Endothelial cell of umbilical vein (primary cell): ENCODE measurements at regions of chr4 and their contacts with region 1.

Region 1: GRCh38 chr4:109548655-109549054 is 11.4 kb upstream of the MCUB start:
- DNase-seq: peak; percentile 94
- H3K4me3 ChIP-seq: peak overlapping the region in 1 of 3 experiments; percentile 1
- H3K27ac ChIP-seq: peak overlapping the region; percentile 84
- H3K4me1 ChIP-seq: peaks cover 17% of the 10 kb centered on the region
- H3K27me3 ChIP-seq: no peaks in the 10 kb centered on the region
- CTCF ChIP-seq: no peak
- POLR2A ChIP-seq: peak; percentile 36

Region 2: DNA sequence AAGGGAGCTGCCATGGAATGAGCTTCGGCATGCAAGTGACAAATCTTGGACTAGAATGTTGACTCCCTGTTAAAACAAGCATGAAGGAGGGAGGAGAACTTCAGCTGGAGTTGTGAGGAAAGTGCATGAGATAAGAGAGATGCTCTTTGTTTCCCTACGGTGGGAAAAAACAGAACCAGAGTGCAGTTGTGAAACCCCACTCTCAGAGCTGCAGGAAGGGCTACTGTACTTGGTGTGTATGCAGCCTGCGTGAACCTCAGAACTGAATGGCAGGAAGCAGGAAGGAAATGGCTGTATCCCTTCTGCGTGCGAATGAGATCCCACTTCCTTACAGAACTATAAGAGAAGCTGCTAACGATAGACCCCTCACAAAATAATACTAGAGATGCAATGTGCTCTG is 421.3 kb after region 1 on chr4:
- CTCF ChIA-PET with region 1: no interaction called
- POLR2A ChIA-PET with region 1: no interaction called
- dilution Hi-C with region 1: no loop called
- intact Hi-C with region 1: loop called (anchors 2 kb)
- DNase-seq: peak; percentile 75
- H3K4me3 ChIP-seq: peak overlapping the region in 1 of 3 experiments; percentile 4
- H3K27ac ChIP-seq: peak overlapping the region; percentile 60
- H3K4me1 ChIP-seq: peaks cover 26% of the 10 kb centered on the region
- H3K27me3 ChIP-seq: no peaks in the 10 kb centered on the region
- CTCF ChIP-seq: no peak
- POLR2A ChIP-seq: no peak